ENCODE measurements at regions of chr1 and their contacts with region 1.

Region 1: DNA sequence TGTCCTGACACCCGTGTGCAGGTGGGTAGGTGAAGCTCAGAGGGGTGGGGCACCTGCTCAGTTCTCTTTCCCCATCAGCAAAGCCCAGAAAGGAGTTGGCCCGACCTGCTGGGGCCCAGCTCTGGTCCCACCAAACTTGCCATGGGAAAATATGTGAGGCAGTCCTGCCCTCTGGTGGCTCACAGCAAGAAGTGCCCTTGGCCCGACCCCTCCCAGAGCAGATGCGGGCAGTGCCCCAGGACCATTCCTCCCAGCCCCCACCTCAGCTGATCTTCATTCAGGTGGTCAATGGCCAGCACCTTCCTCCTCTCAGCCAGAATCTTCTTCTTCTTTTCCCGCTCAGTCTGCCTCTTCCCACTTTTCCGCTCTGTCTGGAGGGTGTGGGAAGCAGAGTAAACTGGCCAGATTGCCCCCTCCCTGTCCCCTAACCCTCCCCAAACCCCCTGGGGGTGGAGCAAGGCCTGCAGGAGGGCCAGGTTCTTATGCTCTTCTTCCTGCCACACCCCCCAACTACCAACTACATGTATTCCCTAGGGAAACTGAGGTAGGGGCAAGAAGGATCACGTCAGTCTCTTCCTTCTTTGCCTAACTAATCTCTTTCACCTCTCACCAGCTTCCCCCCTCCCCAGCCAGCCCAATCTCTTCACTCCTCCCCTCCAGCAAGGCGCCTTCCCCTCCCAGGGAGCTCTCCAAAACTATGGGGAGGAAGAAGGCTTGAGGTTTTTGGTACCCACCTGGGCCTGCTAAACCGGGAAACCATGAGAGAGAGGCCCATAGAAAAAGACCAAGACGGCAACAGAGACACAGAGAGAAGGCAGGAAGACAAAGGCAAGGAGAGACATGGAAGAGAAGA is 15.6 kb downstream of the TNNT2 start:
- DNase-seq: peak; percentile 82
- CTCF ChIP-seq: peak; percentile 71

Region 2: GRCh38 chr1:201261771-201262465 is 100.0 kb before region 1 on chr1:
- CTCF ChIA-PET with region 1: interaction called, 15 read pairs
- POLR2A ChIA-PET with region 1: no interaction called
- DNase-seq: no peak
- CTCF ChIP-seq: no peak

Region 3: DNA sequence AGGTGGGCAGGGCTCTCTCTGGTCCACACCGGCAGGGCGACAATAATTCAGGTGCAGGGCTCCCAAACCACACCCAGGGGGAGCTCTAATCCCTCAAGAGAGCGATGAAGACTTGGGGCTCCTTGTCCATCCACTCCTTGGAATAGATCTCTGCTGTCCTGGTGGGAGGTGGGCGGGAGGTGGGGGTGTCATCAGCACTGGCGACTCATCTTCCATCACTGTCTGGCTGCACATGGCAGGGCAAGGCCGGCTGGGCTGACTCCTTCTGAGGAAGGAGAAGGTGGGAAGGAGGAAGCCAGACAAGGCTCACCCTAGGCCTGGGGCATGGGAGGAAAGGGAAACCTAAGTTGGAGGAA is 13.7 kb before region 1 on chr1:
- CTCF ChIA-PET with region 1: interaction called, 37 read pairs
- POLR2A ChIA-PET with region 1: no interaction called
- DNase-seq: peak; percentile 75
- CTCF ChIP-seq: peak; percentile 62

Region 4: DNA sequence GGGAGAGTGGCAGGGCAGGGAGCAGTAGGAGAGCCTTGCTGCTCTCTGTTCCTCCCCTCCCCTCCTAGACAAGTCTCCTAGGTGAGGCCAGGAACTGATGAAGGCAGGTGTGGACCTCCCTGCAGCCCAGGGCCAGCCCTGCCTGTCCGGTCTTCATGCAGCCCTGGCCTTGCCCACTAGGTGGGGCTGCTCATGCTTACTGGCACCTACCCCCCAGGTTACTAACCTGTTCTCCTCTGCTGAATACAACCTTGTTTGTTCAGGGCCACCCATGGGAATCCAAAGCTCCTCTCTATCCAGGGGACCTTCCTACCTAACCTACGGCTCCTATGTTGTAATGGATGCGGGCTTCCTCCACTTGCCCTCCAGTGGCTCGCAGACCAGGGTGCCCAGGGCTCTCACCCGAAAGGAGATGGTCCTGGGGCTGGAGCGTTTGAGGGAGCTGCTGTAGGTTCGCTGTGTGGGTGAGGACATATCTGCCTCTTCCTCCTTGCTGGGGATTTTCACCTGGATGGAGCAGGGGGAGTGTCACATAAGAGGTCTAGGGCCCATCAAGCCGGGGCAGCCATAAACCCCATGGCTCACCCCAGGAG is 23.5 kb after region 1 on chr1:
- CTCF ChIA-PET with region 1: interaction called, 12 read pairs
- POLR2A ChIA-PET with region 1: no interaction called
- DNase-seq: peak; percentile 85
- CTCF ChIP-seq: peak; percentile 87